ENCODE measurements at regions of chr6 and their contacts with region 1.

Region 1: DNA sequence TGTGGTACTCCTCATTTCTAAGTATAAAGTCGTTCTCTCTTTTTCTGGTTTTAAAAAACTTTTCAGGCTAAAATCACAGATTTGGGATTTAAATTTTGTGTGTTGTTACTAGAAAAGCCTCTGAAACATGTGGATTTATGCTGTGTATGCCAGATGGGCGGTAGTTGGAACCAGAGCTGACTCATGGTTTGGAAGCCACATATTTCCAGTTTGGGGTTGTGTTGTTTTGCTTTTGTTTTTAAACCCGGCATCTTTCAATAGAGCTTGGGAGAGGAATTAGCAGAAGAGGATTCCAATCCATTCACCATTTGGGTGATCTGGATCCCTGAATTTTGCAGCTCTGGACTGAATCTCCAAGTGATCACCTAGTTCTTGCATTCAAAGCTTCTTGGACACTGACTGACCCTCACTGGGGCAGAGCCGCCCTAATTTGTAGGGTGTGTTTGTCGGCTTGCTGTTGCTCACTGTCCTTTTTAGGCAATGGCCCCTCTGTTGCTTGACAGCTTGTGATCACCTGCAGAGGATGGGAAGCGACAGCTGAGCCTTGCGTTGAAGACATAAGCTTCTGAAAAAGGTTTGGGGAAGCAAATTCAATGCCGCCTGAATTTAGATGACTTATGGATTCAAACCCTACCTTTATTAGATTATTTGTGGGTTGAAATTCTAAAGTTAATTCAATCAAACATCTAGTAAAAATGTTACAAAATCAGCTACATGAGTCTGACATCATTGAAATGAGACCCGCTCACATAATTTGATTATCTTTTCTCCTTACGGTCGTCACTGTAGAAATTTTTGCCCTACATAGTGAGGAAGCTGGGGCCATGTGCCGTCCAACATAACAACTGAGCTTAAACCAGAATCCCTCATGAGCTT is 79.9 kb upstream of the CD83 start:
- DNase-seq: no peak
- H3K4me3 ChIP-seq: no peak overlapping the region
- H3K27ac ChIP-seq: no peak overlapping the region
- H3K4me1 ChIP-seq: no peaks in the 10 kb centered on the region
- H3K27me3 ChIP-seq: no peaks in the 10 kb centered on the region
- CTCF ChIP-seq: no peak
- EP300 ChIP-seq: no peak
- POLR2A ChIP-seq: no peak

Region 2: GRCh38 chr6:13924146-13924948 is 113.3 kb before region 1 on chr6:
- intact Hi-C with region 1: loop called in 1 of 4 experiments (anchors 10 kb)
- DNase-seq: peak; percentile 28 to 57 (median 43)
- H3K4me3 ChIP-seq: peak overlapping the region; percentile 40
- H3K27ac ChIP-seq: no peak overlapping the region
- H3K4me1 ChIP-seq: no peaks in the 10 kb centered on the region
- H3K27me3 ChIP-seq: no peaks in the 10 kb centered on the region
- CTCF ChIP-seq: no peak
- EP300 ChIP-seq: no peak
- POLR2A ChIP-seq: no peak

Region 3: DNA sequence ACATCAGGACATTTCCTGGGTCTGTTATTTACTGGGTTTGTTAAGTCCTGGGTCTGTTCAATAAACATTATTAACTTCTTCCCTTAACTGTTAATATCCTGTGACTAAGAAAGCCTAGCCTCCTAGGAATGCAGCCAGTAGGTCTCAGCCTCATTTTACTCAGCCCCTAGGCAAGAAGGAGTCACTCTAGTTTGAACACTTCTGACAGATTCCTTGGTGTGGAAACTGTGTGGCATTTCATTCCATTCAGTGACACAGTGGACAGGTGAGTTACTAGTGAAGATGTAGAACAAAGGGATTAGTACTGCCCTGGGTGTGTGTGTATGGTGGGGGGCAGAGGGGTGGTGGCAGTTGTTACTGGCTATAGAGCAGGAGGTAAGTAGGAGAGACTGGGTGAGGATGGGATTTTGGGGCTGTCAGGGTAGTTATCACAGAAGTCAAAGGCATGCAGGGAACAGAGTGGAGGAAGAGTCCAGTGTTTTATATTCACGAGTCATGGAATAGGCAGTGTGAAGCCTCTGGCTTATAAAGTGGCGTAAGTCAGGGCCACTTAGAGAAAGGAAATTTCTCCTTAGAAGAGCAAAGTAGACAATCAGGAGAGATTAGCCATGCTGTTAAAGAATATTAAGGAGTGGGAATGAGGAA is 84.5 kb before region 1 on chr6:
- intact Hi-C with region 1: no loop called
- DNase-seq: no peak
- H3K4me3 ChIP-seq: no peak overlapping the region
- H3K27ac ChIP-seq: no peak overlapping the region
- H3K4me1 ChIP-seq: no peaks in the 10 kb centered on the region
- H3K27me3 ChIP-seq: no peaks in the 10 kb centered on the region
- CTCF ChIP-seq: no peak
- EP300 ChIP-seq: no peak
- POLR2A ChIP-seq: no peak